ENCODE measurements at regions of chr1 and their contacts with region 1.

Region 1: DNA sequence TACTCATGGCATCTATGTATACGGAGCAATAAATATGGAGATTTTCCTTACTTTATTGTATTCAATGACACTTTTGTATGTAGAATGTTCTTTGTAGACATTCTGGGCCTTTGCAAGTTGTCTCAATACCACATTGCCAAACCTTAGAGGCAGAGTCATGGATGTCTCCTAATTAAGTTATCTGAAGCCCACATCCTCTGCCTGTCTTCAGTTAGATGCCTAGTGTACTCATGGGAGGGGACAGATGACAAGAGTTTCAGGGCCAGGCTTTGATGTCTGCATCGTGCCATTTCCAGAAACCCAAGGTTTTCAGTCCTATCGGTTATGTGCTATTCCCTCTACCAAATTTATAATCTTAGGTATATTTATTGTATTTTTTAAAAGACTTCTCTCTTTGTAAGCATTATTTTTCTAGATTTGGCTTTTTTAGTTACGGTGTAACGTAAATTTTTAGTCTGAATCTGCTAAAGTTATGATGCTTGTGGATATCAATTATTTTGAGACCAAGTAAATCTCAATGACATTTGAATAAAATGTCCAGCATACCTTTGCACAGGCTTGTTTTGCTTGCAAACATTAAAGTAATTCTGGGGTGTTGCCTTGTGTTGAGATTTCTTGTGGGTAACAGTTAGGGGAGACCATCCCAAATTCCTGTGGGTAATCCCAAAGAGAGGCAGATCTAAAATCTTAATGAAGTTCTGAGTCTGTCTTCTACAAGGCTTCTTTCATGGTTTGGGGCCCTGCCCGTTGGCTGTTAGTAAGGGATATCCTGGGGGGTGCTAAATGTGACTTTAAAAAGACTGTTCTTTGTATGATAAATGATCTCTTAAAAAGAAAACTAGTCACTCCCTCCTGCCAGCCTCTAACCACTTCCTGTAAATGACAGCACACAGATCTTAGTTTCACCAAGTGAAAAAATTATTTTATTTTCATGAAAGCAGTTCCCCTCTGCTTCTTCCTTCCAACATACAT is 8.0 kb upstream of the MACF1 start:
- DNase-seq: no peak
- H3K4me3 ChIP-seq: no peak overlapping the region
- H3K27ac ChIP-seq: no peak overlapping the region
- H3K27me3 ChIP-seq: no peaks in the 10 kb centered on the region
- CTCF ChIP-seq: no peak

Region 2: GRCh38 chr1:38919130-38919529 is 277.4 kb before region 1 on chr1:
- CTCF ChIA-PET with region 1: no interaction called
- POLR2A ChIA-PET with region 1: no interaction called
- DNase-seq: no peak
- H3K4me3 ChIP-seq: no peak overlapping the region
- H3K27ac ChIP-seq: no peak overlapping the region
- H3K27me3 ChIP-seq: no peaks in the 10 kb centered on the region
- CTCF ChIP-seq: no peak

Region 3: DNA sequence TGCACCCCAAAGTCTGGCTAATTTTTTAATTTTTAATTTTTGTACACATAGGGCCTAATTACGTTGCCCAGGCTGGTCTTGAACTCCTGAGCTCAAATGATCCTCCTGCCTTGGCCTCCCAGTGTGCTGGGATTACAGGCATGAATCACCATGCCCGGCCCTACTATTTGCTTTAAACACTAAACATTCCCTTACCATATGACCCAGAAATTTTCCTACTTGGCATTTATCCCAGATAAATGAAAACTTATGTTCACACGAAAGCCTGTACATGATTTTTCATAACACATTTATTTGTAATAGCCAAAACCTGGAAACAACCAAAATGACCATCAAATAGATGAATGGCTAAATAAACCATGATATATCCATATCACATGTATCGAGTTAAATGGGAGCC is 134.6 kb before region 1 on chr1:
- CTCF ChIA-PET with region 1: no interaction called
- POLR2A ChIA-PET with region 1: no interaction called
- DNase-seq: no peak
- H3K4me3 ChIP-seq: no peak overlapping the region
- H3K27ac ChIP-seq: no peak overlapping the region
- H3K27me3 ChIP-seq: no peaks in the 10 kb centered on the region
- CTCF ChIP-seq: no peak

Region 4: DNA sequence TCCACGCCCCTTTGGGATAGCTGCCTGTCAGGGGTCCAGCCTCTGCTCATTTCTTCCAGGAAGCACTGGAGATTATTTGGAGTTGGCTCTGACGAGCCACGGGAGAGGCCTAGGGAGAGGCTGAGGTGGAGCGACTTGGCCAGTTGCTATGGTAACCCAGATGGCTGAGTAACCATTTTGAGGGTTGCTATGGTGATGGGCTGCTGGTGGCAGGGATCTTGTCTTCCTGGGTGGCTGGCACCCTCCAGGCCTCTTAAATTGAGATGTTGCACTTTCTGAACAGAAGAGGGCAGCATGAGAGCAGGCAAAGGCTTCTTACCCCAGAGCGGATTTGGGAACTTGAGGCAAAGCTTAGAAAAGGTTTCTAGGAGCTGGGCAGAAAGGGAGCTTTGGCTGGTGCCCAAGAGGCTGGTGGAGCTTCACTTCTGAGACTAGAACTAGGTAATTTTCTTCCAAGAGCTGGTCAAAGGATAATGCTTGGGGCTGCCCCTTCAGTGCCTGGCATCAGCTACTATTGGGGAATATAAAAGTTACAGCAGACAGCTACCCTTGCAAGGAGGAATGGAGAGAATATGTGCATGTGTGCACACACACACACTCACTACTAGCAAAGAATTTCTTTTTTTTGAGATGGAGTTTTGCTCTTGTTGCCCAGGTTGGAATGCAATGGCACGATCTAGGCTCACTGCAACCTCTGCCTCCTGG is 97.8 kb before region 1 on chr1:
- CTCF ChIA-PET with region 1: interaction called, 45 read pairs
- POLR2A ChIA-PET with region 1: no interaction called
- DNase-seq: peak; percentile 82
- H3K4me3 ChIP-seq: no peak overlapping the region
- H3K27ac ChIP-seq: no peak overlapping the region
- H3K27me3 ChIP-seq: no peaks in the 10 kb centered on the region
- CTCF ChIP-seq: peak; percentile 80

Region 5: GRCh38 chr1:39127513-39127912 is 69.0 kb before region 1 on chr1:
- CTCF ChIA-PET with region 1: interaction called, 14 read pairs
- POLR2A ChIA-PET with region 1: no interaction called
- DNase-seq: no peak
- H3K4me3 ChIP-seq: no peak overlapping the region
- H3K27ac ChIP-seq: no peak overlapping the region
- H3K27me3 ChIP-seq: no peaks in the 10 kb centered on the region
- CTCF ChIP-seq: no peak

Region 6: DNA sequence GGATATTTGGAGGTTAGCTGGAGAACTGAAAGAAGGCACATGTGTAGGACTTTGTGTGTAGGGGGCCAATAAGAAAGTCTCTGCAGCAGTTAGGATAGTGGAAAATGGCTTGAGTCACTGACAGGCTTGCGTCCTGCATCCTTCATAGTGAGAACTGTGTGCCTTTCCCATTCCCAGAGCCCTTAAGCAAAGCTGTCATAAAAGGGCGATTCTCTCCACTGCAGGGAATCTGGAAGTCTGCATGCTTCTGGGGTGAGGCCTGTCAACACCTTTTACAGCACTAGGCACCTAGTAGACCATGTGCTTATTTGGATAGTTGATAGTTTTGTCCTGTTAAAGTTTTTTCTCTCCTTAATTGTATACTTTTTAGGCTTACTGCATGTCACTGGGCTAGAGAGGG is 31.5 kb before region 1 on chr1:
- CTCF ChIA-PET with region 1: interaction called, 11 read pairs
- POLR2A ChIA-PET with region 1: interaction called, 4 read pairs
- DNase-seq: no peak
- H3K4me3 ChIP-seq: no peak overlapping the region
- H3K27ac ChIP-seq: peak overlapping the region; percentile 1
- H3K27me3 ChIP-seq: no peaks in the 10 kb centered on the region
- CTCF ChIP-seq: no peak

Region 7: DNA sequence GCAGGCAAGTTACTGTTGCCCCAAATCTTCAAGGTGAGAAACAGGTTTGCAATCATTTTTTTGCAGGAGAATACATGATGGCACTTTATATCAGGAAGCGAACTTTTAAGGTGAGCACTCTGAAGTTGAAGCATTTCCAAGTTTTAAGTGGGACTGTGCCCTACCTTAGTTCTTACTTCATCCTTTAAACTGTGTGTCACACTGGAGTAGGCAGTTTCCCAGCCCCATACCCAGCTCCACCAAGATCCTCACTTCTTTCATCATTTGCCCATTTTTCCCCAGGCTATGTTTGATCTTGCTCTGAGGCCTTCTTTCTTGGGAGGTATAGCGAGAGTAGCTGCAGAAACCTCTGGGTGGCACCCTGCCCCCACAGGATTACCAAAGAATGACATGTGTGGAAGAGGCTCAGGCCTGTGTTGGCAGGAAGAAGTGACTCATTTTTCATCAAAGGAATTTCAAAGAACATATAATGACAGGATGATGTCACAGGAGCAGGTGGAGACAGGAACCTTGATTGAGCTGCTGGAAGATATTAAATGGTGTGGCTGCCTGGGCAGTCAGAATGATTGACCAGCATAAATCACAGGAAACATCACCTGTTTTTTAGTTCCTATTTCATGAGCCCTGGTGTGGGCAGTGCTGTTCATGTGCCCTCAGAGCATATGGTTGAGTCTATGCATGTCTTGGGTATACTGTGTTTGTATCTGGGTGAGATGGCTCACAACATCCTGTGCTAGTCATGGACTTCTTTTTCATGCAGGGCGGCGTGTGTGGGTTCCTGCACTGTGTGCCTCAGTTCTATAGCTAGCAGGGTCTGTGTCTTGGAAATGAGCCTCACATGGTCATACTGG is 12.8 kb before region 1 on chr1:
- CTCF ChIA-PET with region 1: interaction called, 21 read pairs
- POLR2A ChIA-PET with region 1: interaction called, 5 read pairs
- DNase-seq: no peak
- H3K4me3 ChIP-seq: no peak overlapping the region
- H3K27ac ChIP-seq: no peak overlapping the region
- H3K27me3 ChIP-seq: no peaks in the 10 kb centered on the region
- CTCF ChIP-seq: peak; percentile 27; the same call in 1 of the 2 replicates

Region 8: GRCh38 chr1:39238476-39238875 is 41.9 kb after region 1 on chr1:
- CTCF ChIA-PET with region 1: interaction called, 12 read pairs
- POLR2A ChIA-PET with region 1: no interaction called
- DNase-seq: peak; percentile 54
- H3K4me3 ChIP-seq: no peak overlapping the region
- H3K27ac ChIP-seq: peak overlapping the region; percentile 21
- H3K27me3 ChIP-seq: no peaks in the 10 kb centered on the region
- CTCF ChIP-seq: no peak

Region 9: DNA sequence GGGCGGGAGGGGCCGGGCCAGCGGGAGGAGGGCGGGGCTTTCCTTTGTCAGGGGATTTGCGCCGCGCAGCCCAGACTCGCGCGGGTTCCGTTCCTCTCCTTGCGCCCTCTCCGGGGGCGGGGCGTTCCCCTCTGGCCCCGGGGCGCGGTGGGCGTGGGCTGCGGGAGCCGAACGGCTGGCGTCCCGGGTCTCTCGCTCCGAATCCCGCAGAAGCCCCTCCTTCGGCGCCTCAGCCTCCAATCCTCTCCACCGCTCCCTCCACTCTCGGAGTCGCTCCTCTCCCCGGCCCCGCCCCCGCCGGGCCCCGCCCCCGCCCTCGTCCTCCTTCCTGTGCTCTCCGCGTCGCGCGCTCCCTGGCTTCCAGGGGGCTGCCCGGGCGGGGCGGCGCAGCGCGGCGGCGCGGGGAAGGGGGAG is 212.1 kb after region 1 on chr1:
- CTCF ChIA-PET with region 1: interaction called, 10 read pairs
- POLR2A ChIA-PET with region 1: no interaction called
- DNase-seq: peak; percentile 87
- H3K4me3 ChIP-seq: peak overlapping the region; percentile 72
- H3K27ac ChIP-seq: peak overlapping the region; percentile 78
- H3K27me3 ChIP-seq: no peaks in the 10 kb centered on the region
- CTCF ChIP-seq: no peak

Measured in AG04450 (cell line).